A673 (cell line): ENCODE measurements at regions of chr2 and their contacts with region 1.

Region 1: GRCh38 chr2:219057709-219058540 is 2.8 kb downstream of the IHH start:
- DNase-seq: peak; percentile 81
- H3K4me3 ChIP-seq: no peak overlapping the region
- H3K27ac ChIP-seq: no peak overlapping the region
- H3K4me1 ChIP-seq: no peaks in the 10 kb centered on the region
- H3K27me3 ChIP-seq: peaks cover 82% of the 10 kb centered on the region
- CTCF ChIP-seq: peak; percentile 91

Region 2: DNA sequence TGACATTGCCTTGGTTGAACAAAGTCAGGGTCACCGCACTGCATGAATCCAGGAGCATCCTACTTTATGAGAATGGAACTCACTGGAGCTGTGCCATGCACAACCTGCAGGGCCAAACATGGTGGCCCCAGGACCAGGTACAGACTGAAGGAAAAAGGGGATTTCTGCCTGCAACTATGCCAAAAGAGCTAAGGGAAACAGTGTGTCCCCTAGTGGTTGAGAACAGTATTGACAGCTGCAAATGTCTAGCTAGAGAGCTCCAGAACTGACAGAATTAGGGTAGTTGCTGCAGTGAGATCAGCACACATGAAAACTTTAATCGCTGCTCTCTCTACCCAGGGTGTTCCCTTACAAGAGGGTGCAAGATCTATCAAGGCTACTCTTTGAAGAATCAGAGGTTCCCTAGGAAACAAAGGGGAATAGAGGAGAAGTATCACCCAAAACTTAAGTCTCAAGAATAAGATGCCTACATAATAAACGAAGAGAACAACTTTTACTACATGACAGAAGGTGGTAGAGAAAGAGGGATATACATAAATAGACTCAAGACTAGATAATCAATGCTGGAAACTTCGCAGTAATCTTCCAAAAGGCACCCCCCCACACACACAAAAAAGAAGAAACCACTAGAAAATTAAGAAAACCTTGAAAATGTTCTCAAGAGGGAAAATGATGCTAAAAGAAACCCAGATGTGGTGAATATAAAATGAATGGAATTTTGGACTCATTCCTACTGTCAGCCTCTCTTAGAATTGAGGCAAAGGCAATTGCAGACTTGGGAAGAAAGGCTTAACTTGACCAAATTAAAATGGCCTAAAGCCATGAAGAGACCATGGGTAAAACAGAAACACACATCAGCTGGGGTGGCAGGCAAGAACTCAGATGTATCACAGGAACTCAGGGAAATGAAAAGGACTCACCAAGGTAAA is 46.4 kb after region 1 on chr2:
- CTCF ChIA-PET with region 1: interaction called, 18 read pairs
- POLR2A ChIA-PET with region 1: no interaction called
- intact Hi-C with region 1: no loop called
- DNase-seq: peak; percentile 47
- H3K4me3 ChIP-seq: no peak overlapping the region
- H3K27ac ChIP-seq: no peak overlapping the region
- H3K4me1 ChIP-seq: no peaks in the 10 kb centered on the region
- H3K27me3 ChIP-seq: no peaks in the 10 kb centered on the region
- CTCF ChIP-seq: peak; percentile 86

Region 3: DNA sequence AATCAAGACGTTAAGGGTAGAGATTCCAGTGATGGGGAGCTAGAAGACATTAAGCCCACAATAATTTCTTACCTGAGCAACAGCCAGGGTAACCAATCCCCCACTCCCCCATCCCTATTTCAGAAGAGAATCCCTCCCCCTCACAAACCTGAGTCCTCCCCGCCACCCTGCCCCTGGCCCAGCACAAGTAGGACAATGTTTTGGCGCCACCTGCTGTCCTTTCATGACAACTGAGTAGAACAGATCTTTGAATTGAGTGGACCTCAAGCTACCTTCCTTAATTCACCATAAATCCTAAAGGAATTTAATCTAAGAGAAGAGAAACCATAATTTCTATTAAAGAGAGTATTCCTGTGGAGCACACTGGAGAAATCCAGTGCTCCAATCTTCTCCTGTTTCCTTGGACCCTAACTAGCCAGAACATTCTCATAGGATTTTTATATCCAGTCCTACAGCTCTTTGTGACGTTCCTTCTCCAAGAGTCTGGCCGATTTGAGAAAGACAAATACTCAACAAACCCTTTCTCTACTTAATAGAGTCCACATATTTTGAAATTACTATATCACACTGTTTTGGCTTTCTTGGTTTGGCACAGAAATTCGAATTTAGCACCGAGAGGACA is 61.6 kb after region 1 on chr2:
- CTCF ChIA-PET with region 1: interaction called, 5 read pairs
- POLR2A ChIA-PET with region 1: no interaction called
- intact Hi-C with region 1: loop called (anchors 1 kb)
- DNase-seq: peak; percentile 72
- H3K4me3 ChIP-seq: no peak overlapping the region
- H3K27ac ChIP-seq: no peak overlapping the region
- H3K4me1 ChIP-seq: peaks cover 21% of the 10 kb centered on the region
- H3K27me3 ChIP-seq: no peaks in the 10 kb centered on the region
- CTCF ChIP-seq: peak; percentile 89

Region 4: GRCh38 chr2:219155054-219155644 is 97.2 kb after region 1 on chr2:
- CTCF ChIA-PET with region 1: interaction called, 13 read pairs
- POLR2A ChIA-PET with region 1: no interaction called
- intact Hi-C with region 1: loop called (anchors 1 kb)
- DNase-seq: peak; percentile 91
- H3K4me3 ChIP-seq: no peak overlapping the region
- H3K27ac ChIP-seq: no peak overlapping the region
- H3K4me1 ChIP-seq: peaks cover 4% of the 10 kb centered on the region
- H3K27me3 ChIP-seq: no peaks in the 10 kb centered on the region
- CTCF ChIP-seq: peak; percentile 56

Region 5: GRCh38 chr2:219294356-219295351 is 236.7 kb after region 1 on chr2:
- CTCF ChIA-PET with region 1: no interaction called
- POLR2A ChIA-PET with region 1: no interaction called
- intact Hi-C with region 1: loop called (anchors 10 kb)
- DNase-seq: peak; percentile 84
- H3K4me3 ChIP-seq: peak overlapping the region; percentile 59
- H3K27ac ChIP-seq: peak overlapping the region; percentile 56
- H3K4me1 ChIP-seq: peaks cover 4% of the 10 kb centered on the region
- H3K27me3 ChIP-seq: peaks cover 9% of the 10 kb centered on the region
- CTCF ChIP-seq: peak; percentile 92

Region 6: DNA sequence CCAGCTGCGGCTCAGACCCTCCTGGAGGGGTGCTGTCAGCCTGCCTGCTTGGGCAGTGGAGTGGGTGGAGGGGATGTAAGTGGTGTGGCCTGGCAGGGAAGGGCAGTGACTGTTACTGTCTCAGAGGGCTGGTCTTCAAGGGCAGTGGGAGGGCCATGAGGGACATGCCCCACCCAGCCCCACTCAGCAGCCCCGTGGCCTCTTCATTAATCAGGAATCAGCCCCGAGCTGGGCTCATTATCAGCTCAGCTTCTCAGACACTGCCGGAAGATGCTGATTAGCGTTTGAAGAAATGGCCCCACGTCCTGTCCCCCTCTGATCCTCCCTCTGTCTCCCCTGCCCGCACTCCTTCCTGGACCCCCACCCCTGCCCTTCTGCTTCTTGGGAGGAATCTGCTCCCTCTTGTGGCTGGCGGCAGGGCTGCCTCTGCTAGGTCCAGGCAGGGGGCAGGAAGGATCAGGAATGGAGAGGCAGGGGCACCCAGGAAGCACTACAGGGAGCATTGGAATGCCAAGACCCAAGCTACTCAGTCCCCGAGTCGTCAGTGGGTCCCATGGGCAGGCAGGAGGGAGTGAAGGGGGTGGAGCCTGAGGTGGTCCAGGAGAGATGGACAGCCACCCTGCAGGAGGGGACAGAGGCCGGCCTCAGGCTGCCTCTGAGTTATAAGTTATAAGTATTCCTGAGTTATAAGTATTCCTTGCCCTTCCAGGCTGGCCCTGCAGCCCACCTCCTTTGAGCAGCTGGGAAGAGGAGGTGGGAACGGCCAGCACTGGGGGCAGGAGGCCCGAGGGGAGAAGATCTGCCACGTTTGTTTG is 463.3 kb after region 1 on chr2:
- CTCF ChIA-PET with region 1: interaction called, 10 read pairs
- POLR2A ChIA-PET with region 1: no interaction called
- intact Hi-C with region 1: no loop called
- DNase-seq: peak; percentile 73
- H3K4me3 ChIP-seq: no peak overlapping the region
- H3K27ac ChIP-seq: peak overlapping the region; percentile 38
- H3K4me1 ChIP-seq: peaks cover 29% of the 10 kb centered on the region
- H3K27me3 ChIP-seq: no peaks in the 10 kb centered on the region
- CTCF ChIP-seq: peak; percentile 77